CD8-positive, alpha-beta T cell (primary cell): ENCODE measurements at regions of chr7 and their contacts with region 1.

Region 1: DNA sequence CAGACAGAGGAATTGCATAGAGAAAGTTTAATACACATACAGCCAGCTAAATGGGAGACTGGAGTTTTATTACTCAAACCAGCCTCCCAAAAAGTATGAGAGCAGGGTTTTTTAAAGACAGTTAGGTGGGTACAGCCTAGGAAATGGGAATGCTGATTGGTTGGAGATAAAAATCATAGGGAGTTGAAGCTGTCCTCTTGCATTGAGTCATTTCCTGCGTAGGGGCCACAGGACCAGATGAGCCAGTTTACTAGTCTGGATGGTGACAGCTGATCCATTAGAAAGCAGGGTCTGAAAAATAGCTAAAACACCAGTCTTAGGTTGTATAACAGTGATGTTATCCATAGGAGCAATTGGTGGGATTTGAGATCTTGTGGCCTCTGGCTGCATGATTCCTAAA is 76.1 kb upstream of the POM121L12 start:
- DNase-seq: no peak
- ATAC-seq: no peak
- H3K4me3 ChIP-seq: no peak overlapping the region
- H3K4me3 Mint-ChIP-seq: no peak overlapping the region
- H3K27ac ChIP-seq: no peak overlapping the region
- H3K27ac Mint-ChIP-seq: no peak overlapping the region
- H3K4me1 ChIP-seq: no peaks in the 10 kb centered on the region
- H3K4me1 Mint-ChIP-seq: no peaks in the 10 kb centered on the region
- H3K27me3 ChIP-seq: no peaks in the 10 kb centered on the region
- H3K27me3 Mint-ChIP-seq: no peaks in the 10 kb centered on the region
- CTCF ChIP-seq: no peak

Region 2: DNA sequence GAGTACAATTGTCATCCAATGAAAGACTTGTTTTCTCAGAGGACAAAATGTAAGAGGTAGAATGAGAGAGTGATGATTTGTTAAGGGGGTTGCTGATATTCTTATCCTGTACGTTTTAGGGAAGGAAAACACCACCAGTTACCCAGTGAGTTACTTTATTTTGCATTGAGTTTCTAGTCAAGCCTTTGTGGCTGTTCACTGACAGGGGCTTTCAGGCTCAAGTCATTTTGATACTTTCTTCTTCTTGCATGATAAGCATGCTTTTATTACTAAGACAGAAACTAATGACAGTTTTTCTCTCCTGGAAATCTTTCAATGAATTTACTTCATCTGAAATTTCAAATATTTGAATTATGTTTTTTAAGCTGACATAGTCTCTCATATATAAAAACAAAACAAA is 634.1 kb before region 1 on chr7:
- CTCF ChIA-PET with region 1: no interaction called
- POLR2A ChIA-PET with region 1: no interaction called
- intact Hi-C with region 1: loop called in 1 of 2 experiments (anchors 5 kb)
- DNase-seq: no peak
- ATAC-seq: no peak
- H3K4me3 ChIP-seq: no peak overlapping the region
- H3K4me3 Mint-ChIP-seq: no peak overlapping the region
- H3K27ac ChIP-seq: no peak overlapping the region
- H3K27ac Mint-ChIP-seq: no peak overlapping the region
- H3K4me1 ChIP-seq: no peaks in the 10 kb centered on the region
- H3K4me1 Mint-ChIP-seq: no peaks in the 10 kb centered on the region
- H3K27me3 ChIP-seq: no peaks in the 10 kb centered on the region
- H3K27me3 Mint-ChIP-seq: no peaks in the 10 kb centered on the region
- CTCF ChIP-seq: no peak